ENCODE measurements at regions of chr6 and their contacts with region 1.

Region 1: DNA sequence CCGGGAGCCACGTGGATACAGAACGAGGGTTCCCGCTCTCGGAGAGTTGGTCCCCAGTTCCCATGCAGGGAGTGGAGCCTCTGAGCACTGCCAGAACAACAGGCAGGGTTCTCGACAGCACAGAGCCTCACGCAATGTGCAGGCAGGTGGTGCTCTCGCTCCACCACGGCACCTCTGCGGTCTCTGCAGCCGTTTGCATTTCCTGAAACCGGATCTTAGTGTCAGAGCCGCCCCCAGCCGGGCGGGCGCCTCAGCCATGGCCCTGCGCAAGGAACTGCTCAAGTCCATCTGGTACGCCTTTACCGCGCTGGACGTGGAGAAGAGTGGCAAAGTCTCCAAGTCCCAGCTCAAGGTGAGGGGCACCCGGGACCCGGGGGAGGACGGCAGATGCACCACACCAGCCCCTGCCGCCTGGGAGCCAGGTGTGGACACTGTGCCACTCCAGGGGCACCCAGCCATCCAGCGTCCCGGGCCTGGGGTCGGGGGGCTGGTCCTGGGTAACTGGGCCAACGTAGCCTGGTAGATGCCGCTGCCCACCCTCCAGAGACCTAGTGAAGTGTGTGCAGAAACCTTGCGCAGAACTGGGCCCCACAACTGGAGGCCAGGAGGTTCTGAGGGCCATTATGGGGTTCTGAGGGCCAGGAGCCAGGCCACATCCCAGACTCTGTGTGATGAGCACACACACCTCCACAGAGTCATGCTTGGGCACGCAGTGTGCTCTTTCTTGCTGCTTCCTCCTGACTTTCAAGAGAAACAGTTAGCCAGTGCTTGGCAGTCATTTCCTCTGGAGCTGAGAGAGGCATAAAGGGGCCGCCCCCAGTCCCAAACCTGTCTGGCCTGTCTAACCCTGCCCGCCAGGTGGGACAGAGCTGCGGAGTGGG is at the start of gene DEF6:
- DNase-seq: peak; percentile 90
- ATAC-seq: peak; percentile 94
- H3K4me3 Mint-ChIP-seq: peak within 1 kb of the TSS; percentile 46
- H3K27ac Mint-ChIP-seq: 0 out of 2 replicates have a peak within 1 kb of the TSS, but pooled peaks have one; percentile 41
- H3K4me1 Mint-ChIP-seq: peaks cover 35% of the 10 kb centered on the region
- H3K27me3 Mint-ChIP-seq: 0 out of 2 replicates have a peak, but pooled peaks cover 4% of the 10 kb centered on the region
- CTCF ChIP-seq: no peak; the same call in 1 of the 2 replicates
- total RNA-seq, gene DEF6: 11.3 to 12.8 TPM (median 11.4 TPM) in 3 replicates

Region 2: GRCh38 chr6:35318196-35319171 is 20.6 kb after region 1 on chr6:
- CTCF ChIA-PET with region 1: interaction called, 13 read pairs
- POLR2A ChIA-PET with region 1: interaction called, 7 read pairs
- DNase-seq: peak; percentile 96
- ATAC-seq: peak; percentile 99
- H3K4me3 Mint-ChIP-seq: peak overlapping the region; percentile 86
- H3K27ac Mint-ChIP-seq: peak overlapping the region; percentile 27; the same call in 1 of the 2 replicates
- H3K4me1 Mint-ChIP-seq: peaks cover 21% of the 10 kb centered on the region
- H3K27me3 Mint-ChIP-seq: peaks cover 25% of the 10 kb centered on the region
- CTCF ChIP-seq: no peak

Region 3: GRCh38 chr6:35327349-35328027 is 29.6 kb after region 1 on chr6:
- CTCF ChIA-PET with region 1: interaction called, 17 read pairs
- POLR2A ChIA-PET with region 1: no interaction called
- DNase-seq: peak; percentile 76
- ATAC-seq: peak; percentile 98
- H3K4me3 Mint-ChIP-seq: no peak overlapping the region
- H3K27ac Mint-ChIP-seq: no peak overlapping the region
- H3K4me1 Mint-ChIP-seq: peaks cover 9% of the 10 kb centered on the region
- H3K27me3 Mint-ChIP-seq: peaks cover 1% of the 10 kb centered on the region; the same call in 1 of the 2 replicates
- CTCF ChIP-seq: 0 out of 2 replicates have a peak, but pooled peaks have one; percentile 33

Measured in WTC11 (cell line).